PC-3 (cell line): ENCODE measurements at regions of chr14 and their contacts with region 1.

Region 1: GRCh38 chr14:54025661-54026060 is 69.0 kb upstream of the BMP4 start:
- DNase-seq: peak; percentile 94
- ATAC-seq: peak; percentile 96
- H3K4me3 ChIP-seq: no peak overlapping the region
- H3K27ac ChIP-seq: no peak overlapping the region
- H3K4me1 ChIP-seq: peaks cover 13% of the 10 kb centered on the region
- H3K27me3 ChIP-seq: no peaks in the 10 kb centered on the region
- CTCF ChIP-seq: peak; percentile 97

Region 2: GRCh38 chr14:52531481-52531880 is 1494.2 kb before region 1 on chr14:
- CTCF ChIA-PET with region 1: no interaction called
- POLR2A ChIA-PET with region 1: no interaction called
- intact Hi-C with region 1: no loop called
- DNase-seq: no peak
- ATAC-seq: no peak
- H3K4me3 ChIP-seq: no peak overlapping the region
- H3K27ac ChIP-seq: no peak overlapping the region
- H3K4me1 ChIP-seq: peaks cover 6% of the 10 kb centered on the region; the same call in 1 of the 2 replicates
- H3K27me3 ChIP-seq: no peaks in the 10 kb centered on the region
- CTCF ChIP-seq: no peak

Region 3: GRCh38 chr14:53929871-53930715 is 95.6 kb before region 1 on chr14:
- CTCF ChIA-PET with region 1: no interaction called
- POLR2A ChIA-PET with region 1: interaction called, 6 read pairs
- intact Hi-C with region 1: loop called (anchors 1 kb)
- DNase-seq: peak; percentile 68
- ATAC-seq: peak; percentile 68
- H3K4me3 ChIP-seq: no peak overlapping the region
- H3K27ac ChIP-seq: no peak overlapping the region
- H3K4me1 ChIP-seq: peaks cover 25% of the 10 kb centered on the region
- H3K27me3 ChIP-seq: no peaks in the 10 kb centered on the region
- CTCF ChIP-seq: peak; percentile 94

Region 4: GRCh38 chr14:54226103-54226502 is 200.4 kb after region 1 on chr14:
- CTCF ChIA-PET with region 1: no interaction called
- POLR2A ChIA-PET with region 1: interaction called, 10 read pairs
- intact Hi-C with region 1: no loop called
- DNase-seq: no peak
- ATAC-seq: no peak
- H3K4me3 ChIP-seq: no peak overlapping the region
- H3K27ac ChIP-seq: no peak overlapping the region
- H3K4me1 ChIP-seq: no peaks in the 10 kb centered on the region
- H3K27me3 ChIP-seq: no peaks in the 10 kb centered on the region
- CTCF ChIP-seq: no peak